Activated CD8-positive, alpha-beta memory T cell treated with anti-CD3 and anti-CD28 coated beads, Interleukin-2, amount 10 ng/mL, durations not matched to agents 7 days and 5 days (primary cell): ENCODE measurements at regions of chr11 and their contacts with region 1.

Region 1: DNA sequence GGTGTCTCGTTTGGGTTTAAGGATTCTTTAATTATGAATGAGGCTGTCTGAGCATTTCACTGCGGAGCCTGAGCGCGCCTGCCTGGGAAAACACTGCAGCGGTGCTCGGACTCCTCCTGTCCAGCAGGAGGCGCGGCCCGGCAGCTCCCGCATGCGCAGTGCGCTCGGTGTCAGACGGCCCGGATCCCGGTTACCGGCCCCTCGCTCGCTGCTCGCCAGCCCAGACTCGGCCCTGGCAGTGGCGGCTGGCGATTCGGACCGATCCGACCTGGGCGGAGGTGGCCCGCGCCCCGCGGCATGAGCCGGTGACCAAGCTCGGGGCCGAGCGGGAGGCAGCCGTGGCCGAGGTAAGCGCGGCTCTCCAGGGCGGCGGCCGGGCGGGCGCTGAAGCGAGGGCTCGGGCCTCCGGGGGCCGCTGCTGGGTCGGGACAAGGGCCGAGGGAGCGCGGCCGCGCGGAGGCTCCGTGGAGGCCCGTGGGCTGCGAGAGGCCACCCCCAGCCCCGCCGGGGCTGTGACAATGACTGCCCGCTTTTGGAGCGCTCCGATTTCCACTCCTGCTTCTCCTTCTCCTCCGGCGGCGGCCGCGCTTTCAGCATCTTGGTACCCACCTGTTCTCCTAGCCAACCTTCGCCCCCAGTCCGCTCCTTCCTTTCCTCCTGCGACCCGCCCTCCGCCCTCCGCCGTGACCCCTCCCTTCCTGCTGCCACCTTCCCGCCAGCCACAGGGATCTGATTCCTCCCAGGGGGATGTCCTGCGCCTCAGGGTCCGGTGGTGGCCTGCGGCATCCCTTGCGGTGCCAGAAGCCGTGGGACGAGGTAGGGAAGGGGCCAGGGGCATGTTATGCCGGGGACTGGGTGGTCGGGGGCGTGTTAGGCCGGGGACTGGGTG is at the start of gene EXT2:
- DNase-seq: peak; percentile 89
- ATAC-seq: peak; percentile 97
- H3K4me3 Mint-ChIP-seq: peak within 1 kb of the TSS; percentile 78
- H3K27ac Mint-ChIP-seq: peak within 1 kb of the TSS; percentile 3
- H3K4me1 Mint-ChIP-seq: peaks cover 23% of the 10 kb centered on the region
- H3K27me3 Mint-ChIP-seq: peaks cover 11% of the 10 kb centered on the region
- total RNA-seq, gene EXT2: 21.5 to 26.1 TPM

Region 2: GRCh38 chr11:43905813-43906241 is 189.9 kb before region 1 on chr11:
- CTCF ChIA-PET with region 1: no interaction called
- DNase-seq: no peak
- ATAC-seq: no peak
- H3K4me3 Mint-ChIP-seq: no peak overlapping the region
- H3K27ac Mint-ChIP-seq: no peak overlapping the region
- H3K4me1 Mint-ChIP-seq: peaks cover 10% of the 10 kb centered on the region
- H3K27me3 Mint-ChIP-seq: no peaks in the 10 kb centered on the region

Region 3: GRCh38 chr11:44005063-44005701 is 90.6 kb before region 1 on chr11:
- CTCF ChIA-PET with region 1: no interaction called
- DNase-seq: peak; percentile 22
- ATAC-seq: no peak
- H3K4me3 Mint-ChIP-seq: no peak overlapping the region
- H3K27ac Mint-ChIP-seq: no peak overlapping the region
- H3K4me1 Mint-ChIP-seq: no peaks in the 10 kb centered on the region
- H3K27me3 Mint-ChIP-seq: peaks cover 4% of the 10 kb centered on the region

Region 4: GRCh38 chr11:44065841-44066731 is 29.7 kb before region 1 on chr11 and contains the start of gene ACCS:
- CTCF ChIA-PET with region 1: interaction called, 68 read pairs
- DNase-seq: peak; percentile 93
- ATAC-seq: peak; percentile 98
- H3K4me3 Mint-ChIP-seq: peak within 1 kb of the TSS; percentile 86
- H3K27ac Mint-ChIP-seq: peak within 1 kb of the TSS; percentile 88
- H3K4me1 Mint-ChIP-seq: peaks cover 20% of the 10 kb centered on the region
- H3K27me3 Mint-ChIP-seq: no peaks in the 10 kb centered on the region
- total RNA-seq, gene ACCS: 4.9 to 7.7 TPM

Region 5: GRCh38 chr11:44072757-44073658 is 22.7 kb before region 1 on chr11:
- CTCF ChIA-PET with region 1: interaction called, 68 read pairs
- DNase-seq: no peak
- ATAC-seq: no peak
- H3K4me3 Mint-ChIP-seq: no peak overlapping the region
- H3K27ac Mint-ChIP-seq: no peak overlapping the region
- H3K4me1 Mint-ChIP-seq: peaks cover 4% of the 10 kb centered on the region
- H3K27me3 Mint-ChIP-seq: no peaks in the 10 kb centered on the region

Region 6: GRCh38 chr11:44083906-44084305 is 11.8 kb before region 1 on chr11:
- CTCF ChIA-PET with region 1: interaction called, 58 read pairs
- DNase-seq: no peak
- ATAC-seq: no peak
- H3K4me3 Mint-ChIP-seq: no peak overlapping the region
- H3K27ac Mint-ChIP-seq: no peak overlapping the region
- H3K4me1 Mint-ChIP-seq: peaks cover 13% of the 10 kb centered on the region
- H3K27me3 Mint-ChIP-seq: peaks cover 4% of the 10 kb centered on the region

Region 7: GRCh38 chr11:44110231-44110679 is 14.5 kb after region 1 on chr11:
- CTCF ChIA-PET with region 1: interaction called, 88 read pairs
- DNase-seq: peak; percentile 79
- ATAC-seq: peak; percentile 99
- H3K4me3 Mint-ChIP-seq: no peak overlapping the region
- H3K27ac Mint-ChIP-seq: peak overlapping the region; percentile 45
- H3K4me1 Mint-ChIP-seq: peaks cover 8% of the 10 kb centered on the region
- H3K27me3 Mint-ChIP-seq: no peaks in the 10 kb centered on the region

Region 8: GRCh38 chr11:44120169-44120568 is 24.4 kb after region 1 on chr11:
- CTCF ChIA-PET with region 1: interaction called, 21 read pairs
- DNase-seq: no peak
- ATAC-seq: no peak
- H3K4me3 Mint-ChIP-seq: no peak overlapping the region
- H3K27ac Mint-ChIP-seq: no peak overlapping the region
- H3K4me1 Mint-ChIP-seq: no peaks in the 10 kb centered on the region
- H3K27me3 Mint-ChIP-seq: no peaks in the 10 kb centered on the region

Region 9: GRCh38 chr11:44256673-44257291 is 161.0 kb after region 1 on chr11:
- CTCF ChIA-PET with region 1: no interaction called
- DNase-seq: peak; percentile 37
- ATAC-seq: peak; percentile 59
- H3K4me3 Mint-ChIP-seq: no peak overlapping the region
- H3K27ac Mint-ChIP-seq: no peak overlapping the region
- H3K4me1 Mint-ChIP-seq: peaks cover 33% of the 10 kb centered on the region
- H3K27me3 Mint-ChIP-seq: no peaks in the 10 kb centered on the region